Heart right ventricle (tissue), 16 donors: ENCODE measurements at regions of chr5 and their contacts with region 1.

Region 1: GRCh38 chr5:136984772-136985446 is 514.2 kb downstream of the SPOCK1 start:
- DNase-seq: no peak
- ATAC-seq: peak in 7 of 8 donors; percentile 27 to 78 (median 53)
- H3K4me3 ChIP-seq: no peak overlapping the region
- H3K27ac ChIP-seq: peak overlapping the region in 5 of 10 donors; percentile 20 to 64 (median 36)
- H3K4me1 ChIP-seq: peaks cover 0 to 23% (median 18%) of the 10 kb centered on the region in 9 donors
- H3K27me3 ChIP-seq: no peaks in the 10 kb centered on the region
- CTCF ChIP-seq: no peak

Region 2: GRCh38 chr5:134989266-134989830 is 1995.6 kb before region 1 on chr5:
- intact Hi-C with region 1: loop called in 1 of 10 experiments (anchors 10 kb)
- DNase-seq: no peak
- ATAC-seq: no peak
- H3K4me3 ChIP-seq: no peak overlapping the region
- H3K27ac ChIP-seq: no peak overlapping the region
- H3K4me1 ChIP-seq: peaks cover 0 to 4% (median 0%) of the 10 kb centered on the region in 9 donors
- H3K27me3 ChIP-seq: no peaks in the 10 kb centered on the region
- CTCF ChIP-seq: no peak

Region 3: DNA sequence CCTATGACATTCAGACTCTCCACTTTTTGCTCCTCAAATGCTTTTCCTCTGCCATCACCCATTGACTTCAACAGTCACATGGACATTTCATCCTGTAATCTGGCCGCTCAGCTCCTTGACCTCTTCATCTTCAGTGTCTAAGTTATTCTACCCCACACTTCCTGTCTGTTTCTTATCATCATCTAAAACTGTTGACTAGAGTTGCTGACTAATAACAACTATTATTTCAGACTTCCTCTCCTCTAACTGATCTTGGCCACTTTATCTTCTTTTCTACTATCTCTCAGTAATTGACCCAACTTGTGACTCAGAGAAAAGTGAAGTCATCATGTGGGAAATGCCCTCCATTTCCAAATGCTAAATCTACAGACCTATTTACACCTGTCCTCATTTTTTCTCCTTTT is 364.9 kb before region 1 on chr5:
- intact Hi-C with region 1: no loop called
- DNase-seq: no peak
- ATAC-seq: no peak
- H3K4me3 ChIP-seq: no peak overlapping the region
- H3K27ac ChIP-seq: no peak overlapping the region
- H3K4me1 ChIP-seq: no peaks in the 10 kb centered on the region
- H3K27me3 ChIP-seq: peaks cover 0 to 16% (median 0%) of the 10 kb centered on the region in 7 donors
- CTCF ChIP-seq: no peak

Region 4: GRCh38 chr5:136750224-136750862 is 234.6 kb before region 1 on chr5:
- intact Hi-C with region 1: no loop called
- DNase-seq: no peak
- ATAC-seq: no peak
- H3K4me3 ChIP-seq: no peak overlapping the region
- H3K27ac ChIP-seq: no peak overlapping the region
- H3K4me1 ChIP-seq: no peaks in the 10 kb centered on the region
- H3K27me3 ChIP-seq: peaks cover 0 to 10% (median 5%) of the 10 kb centered on the region in 7 donors
- CTCF ChIP-seq: no peak

Region 5: GRCh38 chr5:136963504-136963903 is 21.4 kb before region 1 on chr5:
- intact Hi-C with region 1: no loop called
- DNase-seq: no peak
- ATAC-seq: no peak
- H3K4me3 ChIP-seq: no peak overlapping the region
- H3K27ac ChIP-seq: no peak overlapping the region
- H3K4me1 ChIP-seq: no peaks in the 10 kb centered on the region
- H3K27me3 ChIP-seq: no peaks in the 10 kb centered on the region
- CTCF ChIP-seq: no peak